Right ventricle myocardium superior (tissue), 1 donor: ENCODE measurements at regions of chr5 and their contacts with region 1.

Region 1: DNA sequence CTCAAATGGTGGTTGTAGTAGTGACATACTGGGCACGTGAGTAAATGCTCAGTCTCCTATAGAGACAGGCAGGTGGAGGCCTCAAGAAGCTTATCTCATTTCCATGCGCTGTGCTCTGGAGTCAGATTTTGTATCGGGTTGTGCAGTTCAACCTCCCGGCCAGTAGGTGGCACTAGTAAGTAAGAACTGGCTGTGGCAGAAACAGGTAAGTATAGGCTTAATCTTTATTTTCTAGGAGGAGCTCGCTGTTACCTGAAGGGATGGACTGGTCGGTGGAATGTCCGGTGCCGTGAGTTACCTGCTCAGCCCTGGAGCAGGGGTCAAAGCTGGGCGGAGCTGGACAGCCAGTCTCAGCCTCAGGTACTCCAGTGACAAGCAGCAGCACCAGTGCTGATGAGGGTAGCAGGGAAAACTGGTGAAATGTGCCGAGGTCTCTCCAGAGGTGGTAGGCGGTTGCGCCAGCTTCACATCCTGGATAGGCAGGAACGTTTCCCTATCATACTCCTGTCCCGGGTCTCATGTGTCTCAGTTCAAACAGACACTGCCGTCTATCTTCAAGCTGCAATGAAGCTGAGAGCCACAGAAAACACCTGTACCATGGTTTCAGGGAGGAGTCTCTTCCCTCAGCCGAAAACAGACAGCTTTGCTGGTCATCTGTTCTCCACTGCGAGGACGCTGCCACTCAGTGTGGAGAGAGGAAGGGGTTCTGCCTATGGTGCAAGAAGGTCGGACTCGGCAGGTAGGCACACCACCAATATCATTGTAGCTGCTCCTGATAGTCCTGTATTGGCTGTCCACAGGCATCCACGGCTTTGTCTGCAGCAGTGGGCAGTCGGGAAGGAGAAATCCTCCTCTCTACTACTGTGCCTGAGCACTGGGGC is 880.3 kb upstream of the SEMA6A start:
- DNase-seq: peak; percentile 41
- ATAC-seq: peak; percentile 73

Region 2: DNA sequence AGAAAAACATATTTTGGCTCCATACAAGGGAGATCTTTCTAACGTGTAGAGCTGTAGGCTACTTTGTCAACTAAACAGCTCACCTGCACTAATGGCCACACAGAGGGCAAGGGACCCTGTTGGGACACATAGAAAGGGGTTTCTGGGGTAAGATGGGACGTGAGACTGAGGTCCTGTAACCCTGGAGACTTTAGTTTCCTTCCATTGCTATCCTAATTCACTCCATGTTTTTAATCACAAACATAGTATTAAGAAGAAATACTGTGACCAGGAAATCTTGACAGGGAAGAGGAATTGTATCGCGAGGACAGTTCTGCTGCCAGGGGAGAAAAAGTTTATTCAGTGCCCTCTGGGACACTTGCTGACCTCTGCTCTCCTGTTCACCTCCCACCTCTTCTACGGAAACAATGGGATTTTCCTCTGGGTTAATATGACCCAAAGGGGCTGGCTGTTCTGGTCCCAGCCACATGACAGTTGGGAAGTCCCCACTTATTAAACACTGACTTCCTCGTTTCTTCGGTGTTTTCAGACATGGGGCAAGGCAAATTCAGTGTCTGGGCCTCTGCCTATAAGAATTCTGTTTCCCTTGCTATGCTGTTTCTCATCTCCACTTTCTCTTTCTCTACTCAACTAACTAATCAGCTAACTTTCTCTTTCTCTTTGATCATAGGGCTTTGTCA is 773.5 kb before region 1 on chr5:
- intact Hi-C with region 1: no loop called
- DNase-seq: no peak
- ATAC-seq: no peak

Region 3: GRCh38 chr5:118791926-118792734 is 1337.2 kb after region 1 on chr5:
- intact Hi-C with region 1: loop called (anchors 10 kb)
- DNase-seq: no peak
- ATAC-seq: peak; percentile 94